CD4-positive, alpha-beta memory T cell (primary cell): ENCODE measurements at regions of chr1 and their contacts with region 1.

Region 1: DNA sequence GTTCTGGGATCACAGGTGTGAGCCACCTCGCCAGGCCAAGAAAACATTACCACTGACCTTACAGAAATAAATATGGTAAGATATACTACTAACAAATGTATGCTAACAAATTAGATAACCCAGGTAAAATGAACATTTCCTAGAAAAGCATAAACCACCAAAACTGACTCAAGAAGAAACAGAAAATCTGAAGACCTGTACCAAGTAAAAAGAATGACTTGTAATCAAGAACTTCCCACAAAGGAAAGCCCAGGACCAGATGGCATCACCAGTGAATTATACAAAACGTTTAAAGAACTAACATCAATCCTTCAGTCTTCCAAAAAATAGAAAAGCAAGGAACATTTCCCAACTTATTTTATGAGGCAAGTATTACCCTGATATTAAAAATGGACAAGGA is 29.3 kb downstream of the USP24 start:
- DNase-seq: no peak
- H3K4me3 ChIP-seq: no peak overlapping the region
- H3K4me3 Mint-ChIP-seq: no peak overlapping the region
- H3K27ac ChIP-seq: no peak overlapping the region
- H3K27ac Mint-ChIP-seq: peak overlapping the region in 2 of 7 donors; percentile 30 to 55
- H3K4me1 ChIP-seq: peaks cover 24% of the 10 kb centered on the region
- H3K4me1 Mint-ChIP-seq: peaks cover 38 to 80% (median 46%) of the 10 kb centered on the region in 4 donors
- H3K27me3 ChIP-seq: no peaks in the 10 kb centered on the region
- H3K27me3 Mint-ChIP-seq: no peaks in the 10 kb centered on the region

Region 2: DNA sequence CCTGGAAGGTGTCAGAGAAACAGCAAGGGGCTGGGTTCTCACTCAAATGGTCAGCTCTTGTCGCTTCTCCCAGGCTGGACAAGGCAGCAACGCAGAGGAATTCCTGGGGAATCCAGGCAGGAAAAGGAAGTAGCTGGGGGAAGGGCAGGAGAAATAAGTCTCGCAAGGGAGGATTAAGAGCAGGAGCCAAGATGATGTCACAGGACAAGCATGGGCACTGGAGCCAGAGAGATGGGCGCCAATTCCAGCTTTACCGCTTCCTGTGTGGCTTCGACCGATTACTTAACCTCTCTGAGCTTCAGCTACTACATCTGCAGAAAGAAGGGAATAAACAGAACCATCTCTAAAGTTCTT is 850.1 kb before region 1 on chr1:
- CTCF ChIA-PET with region 1: no interaction called
- POLR2A ChIA-PET with region 1: no interaction called
- intact Hi-C with region 1: no loop called
- DNase-seq: no peak
- H3K4me3 ChIP-seq: no peak overlapping the region
- H3K4me3 Mint-ChIP-seq: no peak overlapping the region
- H3K27ac ChIP-seq: no peak overlapping the region
- H3K27ac Mint-ChIP-seq: peak overlapping the region in 3 of 7 donors; percentile 29 to 82 (median 42)
- H3K4me1 ChIP-seq: peaks cover 27% of the 10 kb centered on the region
- H3K4me1 Mint-ChIP-seq: peaks cover 23 to 81% (median 44%) of the 10 kb centered on the region in 4 donors
- H3K27me3 ChIP-seq: no peaks in the 10 kb centered on the region
- H3K27me3 Mint-ChIP-seq: no peaks in the 10 kb centered on the region

Region 3: GRCh38 chr1:55204997-55205396 is 19.2 kb after region 1 on chr1:
- CTCF ChIA-PET with region 1: interaction called, 3 read pairs
- POLR2A ChIA-PET with region 1: no interaction called
- intact Hi-C with region 1: loop called (anchors 2 kb)
- DNase-seq: no peak
- H3K4me3 ChIP-seq: no peak overlapping the region
- H3K4me3 Mint-ChIP-seq: peak overlapping the region in 4 of 8 donors; percentile 7 to 67 (median 41)
- H3K27ac ChIP-seq: no peak overlapping the region
- H3K27ac Mint-ChIP-seq: peak overlapping the region in 4 of 7 donors; percentile 0 to 70 (median 36)
- H3K4me1 ChIP-seq: peaks cover 91% of the 10 kb centered on the region
- H3K4me1 Mint-ChIP-seq: peaks cover 52 to 77% (median 65%) of the 10 kb centered on the region in 4 donors
- H3K27me3 ChIP-seq: no peaks in the 10 kb centered on the region
- H3K27me3 Mint-ChIP-seq: no peaks in the 10 kb centered on the region

Region 4: DNA sequence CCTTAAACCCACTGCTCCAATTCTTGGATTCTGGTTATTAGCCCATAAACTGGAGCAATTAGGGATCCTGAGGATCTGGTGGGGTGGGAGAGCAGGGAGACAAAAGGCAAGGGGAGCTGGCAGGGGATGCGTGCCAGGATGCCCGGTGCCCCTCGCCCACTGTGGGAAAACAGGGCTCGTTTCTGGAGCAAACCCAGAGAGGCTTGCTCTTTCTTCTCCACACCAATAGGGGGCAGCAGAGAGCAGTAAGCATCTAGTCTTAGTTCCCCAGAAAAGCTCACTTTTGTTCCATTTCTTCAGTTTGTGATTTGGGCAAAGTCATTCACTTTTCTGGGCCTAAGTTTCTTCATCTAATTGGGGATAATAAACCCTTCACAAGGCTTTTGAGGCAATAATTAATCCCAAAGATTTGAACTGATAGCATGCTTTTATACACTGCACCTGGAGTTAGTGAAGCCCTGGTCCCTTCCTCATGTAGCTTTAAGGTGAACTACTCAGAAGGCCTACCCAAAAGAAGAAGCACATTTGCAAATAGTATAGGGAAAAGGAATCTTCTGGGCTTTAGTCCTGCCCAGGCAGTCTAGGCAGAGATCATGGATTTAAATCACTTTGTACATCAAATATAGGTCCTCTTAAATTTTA is 189.9 kb after region 1 on chr1:
- CTCF ChIA-PET with region 1: no interaction called
- POLR2A ChIA-PET with region 1: no interaction called
- intact Hi-C with region 1: no loop called
- DNase-seq: peak in 4 of 5 donors; percentile 8 to 20 (median 12)
- H3K4me3 ChIP-seq: no peak overlapping the region
- H3K4me3 Mint-ChIP-seq: no peak overlapping the region
- H3K27ac ChIP-seq: no peak overlapping the region
- H3K27ac Mint-ChIP-seq: no peak overlapping the region
- H3K4me1 ChIP-seq: no peaks in the 10 kb centered on the region
- H3K4me1 Mint-ChIP-seq: peaks cover 0 to 13% (median 5%) of the 10 kb centered on the region in 4 donors
- H3K27me3 ChIP-seq: no peaks in the 10 kb centered on the region
- H3K27me3 Mint-ChIP-seq: peaks cover 0 to 1% of the 10 kb centered on the region in 2 donors

Region 5: DNA sequence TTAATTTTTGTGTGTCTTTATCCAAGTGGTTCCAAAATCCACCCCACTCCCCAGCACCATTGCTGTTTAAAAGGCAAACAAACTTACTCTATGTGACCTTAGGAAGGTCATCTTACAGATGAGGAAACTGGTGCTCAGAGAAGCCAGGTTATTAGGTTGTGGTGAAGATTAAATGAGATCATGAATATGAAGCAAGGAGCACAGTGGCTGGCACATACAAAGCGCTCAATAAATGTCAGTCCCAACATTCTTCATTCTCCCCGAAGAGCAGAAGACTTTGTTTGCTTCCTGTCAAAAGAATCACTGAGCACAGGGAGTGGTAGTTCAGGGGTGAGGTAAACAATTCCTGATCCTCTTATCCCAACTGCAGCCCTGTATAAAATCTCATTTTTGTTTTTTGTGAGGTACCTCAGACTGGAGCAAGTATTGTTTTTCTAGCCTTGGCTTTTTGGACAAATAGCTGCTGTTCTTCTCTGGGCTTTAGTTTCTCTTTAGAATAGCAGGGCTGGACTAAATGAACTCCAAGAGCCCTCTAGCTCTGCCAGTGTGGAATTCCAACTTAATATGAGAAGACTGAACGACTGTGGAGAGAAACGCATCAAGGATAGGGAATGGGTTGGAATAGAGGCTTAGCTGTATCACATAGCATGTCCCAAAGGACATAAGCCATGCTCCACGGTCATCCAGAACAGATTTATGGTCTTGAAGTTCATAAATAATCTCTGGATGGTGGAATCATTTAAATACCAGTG is 484.7 kb after region 1 on chr1:
- CTCF ChIA-PET with region 1: no interaction called
- POLR2A ChIA-PET with region 1: no interaction called
- intact Hi-C with region 1: no loop called
- DNase-seq: no peak
- H3K4me3 ChIP-seq: no peak overlapping the region
- H3K4me3 Mint-ChIP-seq: no peak overlapping the region
- H3K27ac ChIP-seq: no peak overlapping the region
- H3K27ac Mint-ChIP-seq: no peak overlapping the region
- H3K4me1 ChIP-seq: no peaks in the 10 kb centered on the region
- H3K4me1 Mint-ChIP-seq: no peaks in the 10 kb centered on the region
- H3K27me3 ChIP-seq: no peaks in the 10 kb centered on the region
- H3K27me3 Mint-ChIP-seq: no peaks in the 10 kb centered on the region